CD8-positive, alpha-beta T cell (primary cell): ENCODE measurements at regions of chr7 and their contacts with region 1.

Region 1: DNA sequence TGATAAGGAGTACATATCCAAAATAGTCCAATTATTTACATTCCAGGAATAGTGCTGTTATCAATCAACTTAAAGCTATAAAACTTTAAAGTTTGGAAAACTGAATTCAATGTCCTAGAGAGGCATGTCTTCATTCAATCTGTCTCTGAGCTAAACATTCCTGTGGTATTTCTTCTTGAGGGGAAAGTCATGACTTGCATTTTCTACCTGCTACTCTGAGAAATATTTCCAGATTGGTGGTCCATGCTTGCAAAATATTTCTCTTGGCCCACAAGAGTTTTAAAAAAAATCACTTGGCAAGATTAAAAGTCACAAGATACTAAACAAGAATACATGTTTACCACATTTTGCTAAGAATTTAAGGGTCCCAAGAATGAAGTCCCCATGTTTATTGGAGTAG is 63.6 kb upstream of the HGF start:
- DNase-seq: no peak
- ATAC-seq: no peak
- H3K4me3 ChIP-seq: no peak overlapping the region
- H3K4me3 Mint-ChIP-seq: no peak overlapping the region
- H3K27ac ChIP-seq: no peak overlapping the region
- H3K27ac Mint-ChIP-seq: no peak overlapping the region
- H3K4me1 ChIP-seq: no peaks in the 10 kb centered on the region
- H3K4me1 Mint-ChIP-seq: no peaks in the 10 kb centered on the region
- H3K27me3 ChIP-seq: no peaks in the 10 kb centered on the region
- H3K27me3 Mint-ChIP-seq: no peaks in the 10 kb centered on the region
- CTCF ChIP-seq: no peak

Region 2: DNA sequence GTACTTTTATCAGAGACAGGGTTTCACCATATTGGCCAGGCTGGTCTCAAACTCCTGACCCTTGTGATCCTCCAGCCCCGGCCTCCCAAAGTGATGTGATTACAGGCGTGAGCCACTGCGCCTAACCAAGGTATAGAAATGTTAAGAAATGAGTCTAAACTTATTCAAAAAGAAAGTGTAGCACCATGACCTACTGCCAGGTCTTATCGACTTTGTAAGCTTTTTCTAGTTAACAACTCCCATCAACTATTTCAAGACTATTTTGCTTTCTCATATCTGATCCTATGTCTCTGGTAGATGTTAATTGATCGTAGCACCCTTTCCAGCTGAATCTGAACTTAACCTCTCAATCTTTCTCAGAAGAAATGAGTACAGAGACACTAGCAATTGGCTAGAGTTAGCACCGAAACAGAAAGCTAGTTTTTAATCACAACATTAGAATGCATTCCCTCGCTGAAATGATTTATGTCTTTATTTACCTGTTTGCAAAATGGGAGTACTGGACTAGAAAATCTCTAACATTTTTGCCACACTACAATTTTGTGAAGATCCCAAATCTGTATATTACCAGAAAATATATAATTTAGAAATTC is 50.5 kb after region 1 on chr7:
- CTCF ChIA-PET with region 1: no interaction called
- POLR2A ChIA-PET with region 1: no interaction called
- intact Hi-C with region 1: loop called in 1 of 2 experiments (anchors 5 kb)
- DNase-seq: no peak
- ATAC-seq: no peak
- H3K4me3 ChIP-seq: no peak overlapping the region
- H3K4me3 Mint-ChIP-seq: no peak overlapping the region
- H3K27ac ChIP-seq: no peak overlapping the region
- H3K27ac Mint-ChIP-seq: no peak overlapping the region
- H3K4me1 ChIP-seq: no peaks in the 10 kb centered on the region
- H3K4me1 Mint-ChIP-seq: no peaks in the 10 kb centered on the region
- H3K27me3 ChIP-seq: no peaks in the 10 kb centered on the region
- H3K27me3 Mint-ChIP-seq: no peaks in the 10 kb centered on the region
- CTCF ChIP-seq: no peak